Activated CD4-positive, alpha-beta memory T cell treated with anti-CD3 and anti-CD28 coated beads, Interleukin-2, amount 10 ng/mL, durations not matched to agents 7 days and 5 days (primary cell): ENCODE measurements at regions of chr2 and their contacts with region 1.

Region 1: DNA sequence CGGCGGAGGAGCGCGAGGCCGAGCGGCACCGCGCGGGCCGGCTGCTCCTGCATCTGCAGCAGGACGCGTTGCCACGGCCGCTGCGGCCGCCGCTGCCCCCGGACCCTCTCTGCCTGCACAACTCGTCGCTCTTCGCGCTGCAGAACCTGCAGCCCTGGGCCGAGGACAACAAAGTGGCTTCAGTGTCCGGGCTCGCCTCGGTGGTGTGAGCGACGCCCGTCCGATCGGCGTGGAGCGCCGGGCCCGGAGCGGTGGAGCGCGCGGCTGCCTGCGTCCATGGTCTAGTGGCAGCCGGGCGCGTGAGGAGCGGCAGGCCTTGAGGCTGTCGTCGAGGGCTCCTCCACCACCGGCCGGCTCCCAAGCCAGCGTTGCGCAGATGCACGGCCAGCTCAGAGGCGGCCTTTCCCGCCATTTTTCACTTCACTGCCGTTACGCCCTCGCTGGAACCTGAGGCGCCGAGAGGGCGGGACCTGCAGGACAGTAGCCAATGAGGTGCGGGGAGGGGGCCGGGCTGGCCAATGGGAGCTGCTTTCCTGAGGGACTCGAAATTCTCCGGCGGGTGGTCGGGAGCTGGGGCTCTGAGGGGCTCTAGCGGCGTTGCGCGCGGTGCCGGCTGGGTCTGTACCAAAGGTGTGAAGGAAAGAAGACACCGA is 1.9 kb downstream of the TLX2 start:
- DNase-seq: peak; percentile 81
- H3K4me3 Mint-ChIP-seq: peak overlapping the region; percentile 64
- H3K27ac Mint-ChIP-seq: no peak overlapping the region
- H3K4me1 Mint-ChIP-seq: peaks cover 35% of the 10 kb centered on the region
- H3K27me3 Mint-ChIP-seq: peaks cover 80% of the 10 kb centered on the region

Region 2: DNA sequence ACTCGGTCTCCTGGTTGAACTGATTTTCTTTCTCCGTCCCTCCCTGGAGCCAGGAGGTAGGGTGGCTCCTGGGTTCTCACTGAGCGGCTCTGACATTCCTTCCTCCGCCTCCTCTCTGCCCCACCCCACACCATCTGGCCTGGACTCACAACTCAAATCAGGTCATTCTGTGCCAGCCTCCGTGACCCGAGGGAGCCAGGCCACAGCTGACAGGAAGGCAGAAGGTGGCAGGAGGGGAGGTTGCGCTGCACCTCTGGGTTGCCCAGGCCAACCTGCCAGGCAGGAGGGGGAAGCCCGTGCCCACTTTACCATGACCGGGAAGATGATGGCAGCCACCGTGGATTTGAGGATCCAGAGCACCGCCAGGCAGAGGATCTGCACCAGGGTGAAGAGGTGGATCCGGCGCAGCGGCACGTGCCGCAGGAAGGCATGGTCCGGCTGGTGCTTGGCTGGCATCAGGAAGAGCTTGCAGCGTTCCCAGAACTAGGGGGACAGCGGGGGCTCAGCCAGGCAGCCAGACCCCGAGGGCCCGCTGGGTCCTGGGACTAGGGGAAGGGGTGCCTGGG is 289.4 kb before region 1 on chr2:
- CTCF ChIA-PET with region 1: no interaction called
- POLR2A ChIA-PET with region 1: no interaction called
- DNase-seq: no peak
- H3K4me3 Mint-ChIP-seq: no peak overlapping the region
- H3K27ac Mint-ChIP-seq: no peak overlapping the region
- H3K4me1 Mint-ChIP-seq: peaks cover 8% of the 10 kb centered on the region
- H3K27me3 Mint-ChIP-seq: no peaks in the 10 kb centered on the region

Region 3: GRCh38 chr2:74498500-74499266 is 17.4 kb before region 1 on chr2:
- CTCF ChIA-PET with region 1: interaction called, 3 read pairs
- POLR2A ChIA-PET with region 1: interaction called, 25 read pairs
- DNase-seq: peak; percentile 60
- H3K4me3 Mint-ChIP-seq: peak overlapping the region; percentile 80
- H3K27ac Mint-ChIP-seq: peak overlapping the region; percentile 77
- H3K4me1 Mint-ChIP-seq: peaks cover 44% of the 10 kb centered on the region
- H3K27me3 Mint-ChIP-seq: peaks cover 45% of the 10 kb centered on the region

Region 4: DNA sequence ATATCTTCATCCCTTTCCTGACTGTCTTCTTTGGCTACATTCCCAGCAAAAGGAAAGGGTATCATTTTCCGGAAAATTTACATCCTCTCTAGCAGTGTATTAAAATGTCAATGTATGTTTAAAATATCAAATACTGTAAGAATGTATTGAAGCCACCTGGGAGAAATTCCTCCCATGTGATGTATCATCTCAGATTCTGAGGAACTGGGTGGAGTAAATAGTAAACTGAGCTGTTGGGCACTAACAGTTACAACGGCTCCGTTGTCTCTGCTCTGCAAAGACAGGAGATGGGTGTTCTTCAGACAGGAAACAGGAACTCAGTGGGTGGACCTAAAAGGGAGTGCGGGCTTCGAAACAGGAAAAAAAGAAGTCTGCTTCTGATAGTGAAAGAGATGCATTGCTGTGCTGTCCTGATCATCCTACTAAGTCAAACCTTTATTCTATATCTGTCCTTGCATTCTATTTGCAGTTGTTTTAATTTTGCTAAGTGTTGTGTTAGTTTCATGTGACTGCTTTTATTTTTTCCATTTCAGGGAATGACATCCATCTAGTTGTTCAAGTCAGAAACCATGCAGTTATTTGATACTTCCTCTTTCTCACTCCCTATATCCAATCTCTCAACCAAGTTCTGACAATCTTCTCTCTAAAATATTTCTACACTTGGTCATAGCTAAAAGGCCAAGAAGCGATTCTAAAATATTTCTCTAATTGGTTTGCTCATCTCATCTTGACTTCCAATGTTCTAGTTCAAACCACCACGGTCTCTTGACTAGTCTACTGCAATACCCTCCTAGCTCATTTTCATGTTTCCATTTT is 57.8 kb after region 1 on chr2:
- CTCF ChIA-PET with region 1: no interaction called
- POLR2A ChIA-PET with region 1: no interaction called
- DNase-seq: no peak
- H3K4me3 Mint-ChIP-seq: peak overlapping the region; percentile 48
- H3K27ac Mint-ChIP-seq: peak overlapping the region; percentile 77
- H3K4me1 Mint-ChIP-seq: peaks cover 51% of the 10 kb centered on the region
- H3K27me3 Mint-ChIP-seq: no peaks in the 10 kb centered on the region